A673 (cell line): ENCODE measurements at regions of chr20 and their contacts with region 1.

Region 1: DNA sequence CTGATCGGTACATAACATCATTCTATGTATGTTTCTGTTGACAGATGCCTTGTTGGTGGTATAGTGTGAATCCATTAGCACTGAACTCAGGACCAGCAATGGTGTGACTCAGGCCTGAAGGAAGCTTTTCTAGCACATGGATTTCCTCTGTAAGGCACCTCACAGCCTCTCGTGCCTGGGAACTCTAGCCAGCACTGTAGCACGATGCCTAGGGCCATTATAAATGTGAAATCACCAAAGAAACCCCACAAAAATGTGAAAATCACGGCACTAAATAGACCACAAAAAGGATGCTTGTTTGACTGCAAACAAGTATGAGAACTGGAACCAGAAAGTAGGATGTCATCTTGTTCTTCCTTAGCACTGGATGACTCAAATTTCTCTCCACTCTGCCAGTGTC is 63.7 kb upstream of the NKX2-2 start:
- DNase-seq: no peak
- H3K4me3 ChIP-seq: no peak overlapping the region
- H3K27ac ChIP-seq: peak overlapping the region; percentile 96
- H3K4me1 ChIP-seq: peaks cover 52% of the 10 kb centered on the region
- H3K27me3 ChIP-seq: no peaks in the 10 kb centered on the region
- CTCF ChIP-seq: no peak

Region 2: DNA sequence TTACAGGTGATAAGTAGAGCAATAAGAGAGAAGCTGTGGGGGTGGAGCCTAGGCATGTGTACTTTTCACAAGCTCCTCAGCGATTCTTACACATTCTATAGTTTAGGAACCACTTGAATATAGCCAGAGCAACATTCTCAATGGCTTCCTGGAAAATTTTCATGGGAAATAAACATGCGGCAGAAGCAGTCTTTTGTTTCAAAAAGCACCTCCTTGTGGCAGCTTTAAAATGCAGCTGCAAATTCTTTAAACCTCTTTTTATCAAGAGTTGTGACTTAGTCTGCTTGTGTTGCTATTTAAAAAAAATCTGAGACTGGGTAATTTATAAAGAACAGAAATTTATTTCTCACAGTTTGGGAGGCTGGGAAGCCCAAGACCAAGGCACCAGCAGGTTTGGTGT is 87.5 kb before region 1 on chr20:
- CTCF ChIA-PET with region 1: no interaction called
- POLR2A ChIA-PET with region 1: no interaction called
- intact Hi-C with region 1: no loop called
- DNase-seq: no peak
- H3K4me3 ChIP-seq: no peak overlapping the region
- H3K27ac ChIP-seq: no peak overlapping the region
- H3K4me1 ChIP-seq: no peaks in the 10 kb centered on the region
- H3K27me3 ChIP-seq: no peaks in the 10 kb centered on the region
- CTCF ChIP-seq: peak; percentile 43

Region 3: GRCh38 chr20:21522481-21523280 is 54.9 kb before region 1 on chr20:
- CTCF ChIA-PET with region 1: interaction called, 3 read pairs
- POLR2A ChIA-PET with region 1: no interaction called
- intact Hi-C with region 1: loop called (anchors 2 kb)
- DNase-seq: peak; percentile 28
- H3K4me3 ChIP-seq: peak overlapping the region; percentile 84
- H3K27ac ChIP-seq: peak overlapping the region; percentile 94
- H3K4me1 ChIP-seq: peaks cover 12% of the 10 kb centered on the region
- H3K27me3 ChIP-seq: peaks cover 10% of the 10 kb centered on the region
- CTCF ChIP-seq: no peak

Region 4: DNA sequence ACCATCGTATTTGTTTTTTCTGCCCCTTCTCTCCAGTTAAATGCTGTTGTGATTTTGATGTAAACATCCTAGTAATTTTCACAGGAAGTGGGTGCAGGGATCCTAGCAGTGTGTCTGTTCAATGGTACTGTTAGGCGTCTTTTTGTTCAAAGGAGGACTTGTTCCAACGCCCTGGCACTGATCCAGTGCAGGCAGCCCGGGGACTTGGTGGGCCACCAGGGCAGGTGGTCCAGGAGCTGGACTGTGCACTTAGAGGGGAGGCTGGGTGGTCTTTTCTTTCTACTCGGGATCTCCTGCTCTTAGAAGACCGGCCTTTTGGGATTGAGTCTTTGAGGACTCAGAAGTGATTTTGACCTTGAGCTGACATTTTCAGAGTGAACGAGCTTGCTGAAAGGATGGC is 22.6 kb before region 1 on chr20:
- CTCF ChIA-PET with region 1: no interaction called
- POLR2A ChIA-PET with region 1: interaction called, 4 read pairs
- intact Hi-C with region 1: loop called (anchors 1 kb)
- DNase-seq: peak; percentile 50
- H3K4me3 ChIP-seq: no peak overlapping the region
- H3K27ac ChIP-seq: peak overlapping the region; percentile 95
- H3K4me1 ChIP-seq: peaks cover 30% of the 10 kb centered on the region
- H3K27me3 ChIP-seq: no peaks in the 10 kb centered on the region
- CTCF ChIP-seq: no peak